Lower leg skin (tissue), 4 donors: ENCODE measurements at regions of chr1 and their contacts with region 1.

Region 1: GRCh38 chr1:156419854-156420204 is 50.8 kb downstream of the RHBG start:
- DNase-seq: no peak
- H3K4me3 ChIP-seq: no peak overlapping the region
- CTCF ChIP-seq: no peak
- POLR2A ChIP-seq: no peak

Region 2: GRCh38 chr1:155706091-155706619 is 713.7 kb before region 1 on chr1:
- intact Hi-C with region 1: loop called (anchors 5 kb)
- DNase-seq: no peak
- H3K4me3 ChIP-seq: no peak overlapping the region
- CTCF ChIP-seq: no peak
- POLR2A ChIP-seq: no peak